ENCODE measurements at regions of chr6 and their contacts with region 1.

Region 1: GRCh38 chr6:144284783-144285547 is at the start of gene UTRN:
- DNase-seq: peak; percentile 91 to 94
- ATAC-seq: peak; percentile 92
- H3K4me3 ChIP-seq: peak within 1 kb of the TSS; percentile 73 to 75
- H3K27ac ChIP-seq: peak within 1 kb of the TSS; percentile 57 to 89
- H3K4me1 ChIP-seq: no peaks in the 10 kb centered on the region
- H3K27me3 ChIP-seq: no peaks in the 10 kb centered on the region
- total RNA-seq, gene UTRN: 238 to 259 TPM

Region 2: GRCh38 chr6:144095331-144096002 is 189.5 kb before region 1 on chr6 and contains the start of gene SF3B5:
- intact Hi-C with region 1: loop called (anchors 5 to 10 kb)
- DNase-seq: peak; percentile 99 to 100
- ATAC-seq: peak; percentile 100
- H3K4me3 ChIP-seq: peak within 1 kb of the TSS; percentile 50 to 81
- H3K27ac ChIP-seq: peak within 1 kb of the TSS; percentile 11 to 15
- H3K4me1 ChIP-seq: peaks cover 0 to 6% of the 10 kb centered on the region in 2 donors
- H3K27me3 ChIP-seq: no peaks in the 10 kb centered on the region
- total RNA-seq, gene SF3B5: 75.2 to 82.4 TPM

Region 3: DNA sequence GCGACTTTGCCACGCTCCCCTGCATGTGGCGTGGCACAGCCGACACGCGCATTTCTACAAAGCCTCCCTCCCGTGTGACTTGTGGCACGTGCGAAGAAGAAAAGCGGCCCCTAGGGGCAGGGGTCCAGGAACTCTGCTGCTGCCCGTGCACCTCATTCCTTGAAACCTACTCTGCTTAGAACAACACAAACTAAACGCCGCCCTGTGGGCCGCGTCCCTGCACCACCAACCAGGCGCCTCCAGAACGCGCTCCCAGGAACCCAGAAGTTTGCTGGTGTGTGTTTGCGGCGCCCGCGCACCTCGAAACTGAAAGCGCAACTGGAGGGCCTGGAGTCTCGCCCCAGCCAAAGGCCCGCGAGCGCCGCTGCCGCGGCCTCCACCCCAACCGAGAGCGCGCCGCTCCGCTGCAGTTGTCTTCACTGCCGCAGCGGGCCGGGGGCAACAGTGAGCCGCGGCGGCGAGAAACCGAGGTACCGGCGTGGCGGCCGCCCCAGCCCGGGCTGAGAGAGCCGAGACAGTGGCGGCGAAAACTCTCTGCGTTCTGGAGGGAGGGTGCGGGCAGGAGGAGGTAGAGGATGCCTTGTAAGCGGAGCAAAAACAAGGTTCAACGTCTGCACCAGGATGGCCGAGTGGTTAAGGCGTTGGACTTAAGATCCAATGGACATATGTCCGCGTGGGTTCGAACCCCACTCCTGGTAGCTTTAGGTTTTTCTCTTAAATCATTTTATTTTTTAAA is 68.9 kb before region 1 on chr6:
- intact Hi-C with region 1: loop called (anchors 1 to 5 kb)
- DNase-seq: peak; percentile 95 to 97
- ATAC-seq: peak; percentile 97
- H3K4me3 ChIP-seq: peak overlapping the region; percentile 48 to 87
- H3K27ac ChIP-seq: peak overlapping the region; percentile 31 to 87
- H3K4me1 ChIP-seq: no peaks in the 10 kb centered on the region
- H3K27me3 ChIP-seq: no peaks in the 10 kb centered on the region

Region 4: DNA sequence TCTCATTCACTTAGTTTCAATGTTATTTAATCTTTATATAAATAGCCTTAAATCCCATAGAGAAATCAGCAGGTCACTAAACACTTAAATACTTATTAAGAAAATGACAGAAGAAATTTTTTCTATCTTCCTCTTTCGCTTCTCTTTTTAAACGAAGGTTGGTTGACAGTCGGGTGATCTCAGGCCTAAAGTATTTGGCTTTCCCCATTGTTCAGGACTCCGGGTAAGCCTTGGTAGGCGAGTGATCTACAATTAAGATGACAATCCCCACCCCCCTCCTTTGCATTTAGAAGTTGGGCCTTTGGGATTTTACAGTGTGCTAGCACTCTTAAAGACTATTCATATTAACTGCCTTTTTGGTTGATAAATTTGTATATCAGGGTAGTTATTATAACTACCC is 19.6 kb before region 1 on chr6:
- intact Hi-C with region 1: loop called in 1 of 2 experiments (anchors 2 kb)
- DNase-seq: no peak
- ATAC-seq: no peak
- H3K4me3 ChIP-seq: no peak overlapping the region
- H3K27ac ChIP-seq: no peak overlapping the region
- H3K4me1 ChIP-seq: peaks cover 2 to 4% of the 10 kb centered on the region in 2 donors
- H3K27me3 ChIP-seq: no peaks in the 10 kb centered on the region

Region 5: GRCh38 chr6:144482142-144482541 is 197.2 kb after region 1 on chr6:
- intact Hi-C with region 1: loop called (anchors 5 to 10 kb)
- DNase-seq: peak; percentile 82 to 89
- ATAC-seq: peak; percentile 65
- H3K4me3 ChIP-seq: no peak overlapping the region
- H3K27ac ChIP-seq: no peak overlapping the region
- H3K4me1 ChIP-seq: peaks cover 3 to 7% of the 10 kb centered on the region in 2 donors
- H3K27me3 ChIP-seq: no peaks in the 10 kb centered on the region

Measured in aorta (tissue), 5 donors.